ENCODE measurements at regions of chr5 and their contacts with region 1.

Region 1: GRCh38 chr5:134904630-134905245 is at the start of gene PCBD2:
- DNase-seq: peak; percentile 93
- H3K4me3 ChIP-seq: peak within 1 kb of the TSS; percentile 60 to 78
- H3K27ac ChIP-seq: peak within 1 kb of the TSS; percentile 87 to 88
- H3K4me1 ChIP-seq: no peaks in the 10 kb centered on the region
- H3K27me3 ChIP-seq: no peaks in the 10 kb centered on the region
- CTCF ChIP-seq: peak; percentile 80
- EP300 ChIP-seq: 0 out of 4 replicates have a peak, but pooled peaks of 1 of the 2 experiments have one; percentile 12
- RAD21 ChIP-seq: peak; percentile 58
- polyA plus RNA-seq, gene PCBD2: 5.1 and 6.2 TPM in 2 replicates

Region 2: DNA sequence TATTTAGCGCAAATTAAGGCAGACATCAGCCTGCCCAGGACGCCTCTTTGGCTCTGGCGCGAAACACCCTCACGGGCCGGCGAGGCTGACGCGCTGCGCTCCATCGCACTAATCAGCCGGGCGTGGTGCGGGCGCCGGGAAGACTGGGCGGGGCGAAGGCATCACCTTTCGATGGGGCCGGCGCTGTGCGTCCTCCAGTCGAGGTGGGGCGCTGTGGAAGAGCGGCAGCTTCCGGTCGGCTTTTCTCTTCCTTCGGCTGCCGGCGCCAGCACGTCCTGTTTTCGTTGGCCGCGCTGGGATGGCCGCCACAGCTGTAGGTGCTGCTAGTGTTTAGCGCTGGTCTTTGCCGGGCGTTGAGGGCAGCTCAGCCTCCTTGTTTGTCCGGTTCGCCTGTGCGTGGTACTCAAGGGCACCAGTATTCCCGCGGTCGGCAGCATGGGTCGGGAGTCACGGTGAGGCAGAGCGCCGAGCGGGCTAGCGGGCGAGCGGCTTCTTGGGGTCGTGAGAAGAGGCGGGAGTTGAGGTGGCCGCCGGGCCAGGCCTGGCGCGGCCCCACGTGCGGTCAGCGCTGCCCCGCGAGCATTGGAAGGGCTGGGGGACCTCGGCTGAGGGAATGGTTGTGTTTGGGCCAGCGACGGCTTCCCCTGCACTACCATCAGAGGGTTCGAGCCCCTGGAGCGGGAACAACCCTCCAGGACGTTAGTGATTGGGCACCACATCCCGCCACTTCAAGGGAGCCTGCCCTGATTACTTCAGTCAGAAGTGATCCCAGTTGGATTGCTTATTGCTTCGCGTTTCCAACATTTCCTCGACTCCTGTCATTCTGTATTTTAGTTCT is 146.0 kb before region 1 on chr5 and contains the start of gene DDX46:
- CTCF ChIA-PET with region 1: interaction called, 13 read pairs
- POLR2A ChIA-PET with region 1: interaction called, 12 read pairs
- DNase-seq: peak; percentile 97
- H3K4me3 ChIP-seq: peak within 1 kb of the TSS; percentile 79 to 98
- H3K27ac ChIP-seq: peak within 1 kb of the TSS; percentile 72 to 76
- H3K4me1 ChIP-seq: peaks cover 6 to 9% of the 10 kb centered on the region in 2 experiments; a peak in 3 of 4 replicates
- H3K27me3 ChIP-seq: no peaks in the 10 kb centered on the region
- CTCF ChIP-seq: peak; percentile 76
- EP300 ChIP-seq: no peak
- RAD21 ChIP-seq: no peak
- polyA plus RNA-seq, gene DDX46: 20.3 and 22.6 TPM in 2 replicates

Region 3: GRCh38 chr5:134851307-134851923 is 53.3 kb before region 1 on chr5:
- CTCF ChIA-PET with region 1: interaction called, 13 read pairs
- POLR2A ChIA-PET with region 1: interaction called, 3 read pairs
- DNase-seq: peak; percentile 40
- H3K4me3 ChIP-seq: no peak overlapping the region
- H3K27ac ChIP-seq: peak overlapping the region; percentile 3 to 42; a peak in 2 of 4 replicates
- H3K4me1 ChIP-seq: peaks cover 6 to 24% of the 10 kb centered on the region in 2 experiments
- H3K27me3 ChIP-seq: no peaks in the 10 kb centered on the region
- CTCF ChIP-seq: peak; percentile 67
- EP300 ChIP-seq: no peak
- RAD21 ChIP-seq: peak; percentile 48

Region 4: GRCh38 chr5:134879456-134879855 is 25.3 kb before region 1 on chr5:
- CTCF ChIA-PET with region 1: interaction called, 21 read pairs
- POLR2A ChIA-PET with region 1: interaction called, 17 read pairs
- DNase-seq: no peak
- H3K4me3 ChIP-seq: no peak overlapping the region
- H3K27ac ChIP-seq: no peak overlapping the region
- H3K4me1 ChIP-seq: peaks cover 9 to 14% of the 10 kb centered on the region in 2 experiments; a peak in 2 of 4 replicates
- H3K27me3 ChIP-seq: no peaks in the 10 kb centered on the region
- CTCF ChIP-seq: no peak
- EP300 ChIP-seq: no peak
- RAD21 ChIP-seq: no peak

Region 5: DNA sequence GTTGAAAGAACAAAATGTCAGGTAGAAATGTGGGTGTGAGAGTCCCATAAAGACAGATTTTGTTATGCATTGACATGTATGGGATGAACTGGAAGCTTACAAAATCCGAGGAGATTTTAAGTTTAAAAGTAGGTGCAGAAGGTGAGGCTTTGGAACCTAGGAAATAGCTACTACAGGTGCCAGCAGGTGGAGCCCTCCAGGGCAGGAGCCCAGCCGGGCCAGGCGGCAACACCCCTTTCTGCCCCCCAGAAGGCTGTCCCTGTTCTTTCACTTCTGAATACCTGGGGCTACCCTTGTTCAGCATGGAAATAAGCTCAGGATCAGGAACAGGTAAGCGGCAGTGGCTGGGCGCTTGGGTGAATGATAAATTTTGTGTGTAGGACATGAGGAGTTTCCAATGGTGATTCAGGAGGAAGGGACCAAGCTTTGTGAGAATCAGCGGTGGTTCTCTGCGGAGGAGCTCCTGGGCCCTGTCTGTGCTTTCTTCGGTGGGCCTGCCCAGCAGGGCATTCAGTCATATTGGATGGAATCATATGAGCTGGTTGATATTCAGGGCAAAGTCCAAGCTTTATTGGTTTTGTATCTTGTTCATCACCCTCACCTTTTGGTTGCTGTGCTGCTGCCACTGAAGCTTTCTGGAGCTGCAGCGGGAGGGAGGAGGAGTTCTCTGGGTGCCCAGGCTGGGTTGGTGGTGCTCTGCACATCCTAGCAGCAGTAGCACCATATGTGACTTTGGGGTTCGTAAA is 12.5 kb after region 1 on chr5:
- CTCF ChIA-PET with region 1: interaction called, 25 read pairs
- POLR2A ChIA-PET with region 1: interaction called, 5 read pairs
- DNase-seq: no peak
- H3K4me3 ChIP-seq: no peak overlapping the region
- H3K27ac ChIP-seq: no peak overlapping the region
- H3K4me1 ChIP-seq: peaks cover 0 to 3% of the 10 kb centered on the region in 2 experiments; a peak in 1 of 4 replicates
- H3K27me3 ChIP-seq: no peaks in the 10 kb centered on the region
- CTCF ChIP-seq: peak; percentile 32
- EP300 ChIP-seq: no peak
- RAD21 ChIP-seq: peak; percentile 30; the same call in 1 of the 2 replicates

Region 6: DNA sequence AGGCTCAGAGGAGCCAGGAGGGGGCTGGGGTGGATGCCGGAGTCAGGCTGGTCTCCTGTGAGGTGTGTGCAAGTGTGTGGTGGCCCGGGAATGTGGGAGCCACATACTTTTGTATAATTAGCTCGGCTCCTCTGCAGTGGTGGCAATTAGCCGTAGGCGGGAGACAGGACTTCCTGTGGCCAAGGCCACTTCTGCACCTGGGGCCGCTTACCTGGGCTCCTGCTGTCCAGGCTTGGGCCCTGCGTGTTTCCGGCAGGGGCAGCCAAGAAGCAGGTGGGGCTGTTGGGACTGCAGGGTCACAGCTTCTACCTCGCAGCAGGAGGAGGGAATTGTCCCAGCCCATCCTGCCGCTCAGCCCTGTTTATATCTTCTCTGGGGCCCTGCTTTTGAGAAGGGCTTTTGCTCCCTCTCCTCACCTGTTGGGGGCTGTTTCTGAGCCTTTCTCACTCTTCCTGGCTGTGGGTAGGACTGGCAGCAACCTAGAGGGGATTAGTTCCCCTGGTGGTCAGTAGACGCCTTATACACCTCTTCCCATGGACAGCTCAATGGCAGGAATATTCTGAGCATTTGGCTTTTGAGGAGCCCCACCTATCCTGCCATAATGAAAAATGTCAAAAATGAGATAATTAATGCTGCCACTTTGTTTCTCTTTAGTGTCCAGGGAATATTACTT is 274.7 kb after region 1 on chr5:
- CTCF ChIA-PET with region 1: no interaction called
- POLR2A ChIA-PET with region 1: no interaction called
- DNase-seq: no peak
- H3K4me3 ChIP-seq: no peak overlapping the region
- H3K27ac ChIP-seq: no peak overlapping the region
- H3K4me1 ChIP-seq: no peaks in the 10 kb centered on the region
- H3K27me3 ChIP-seq: no peaks in the 10 kb centered on the region; the same call in 1 of the 2 replicates
- CTCF ChIP-seq: no peak
- EP300 ChIP-seq: no peak
- RAD21 ChIP-seq: no peak

Region 7: GRCh38 chr5:135191084-135191826 is 286.5 kb after region 1 on chr5:
- CTCF ChIA-PET with region 1: interaction called, 18 read pairs
- POLR2A ChIA-PET with region 1: interaction called, 4 read pairs
- DNase-seq: peak; percentile 90
- H3K4me3 ChIP-seq: peak overlapping the region; percentile 50 to 53
- H3K27ac ChIP-seq: no peak overlapping the region
- H3K4me1 ChIP-seq: peaks cover 0 to 7% of the 10 kb centered on the region in 2 experiments; a peak in 1 of 4 replicates
- H3K27me3 ChIP-seq: no peaks in the 10 kb centered on the region
- CTCF ChIP-seq: peak; percentile 78
- EP300 ChIP-seq: no peak
- RAD21 ChIP-seq: peak; percentile 89

Measured in SK-N-SH (cell line).